ENCODE measurements at regions of chr11 and their contacts with region 1.

Region 1: GRCh38 chr11:73393479-73394380 is 17.5 kb downstream of the RELT start:
- DNase-seq: peak; percentile 44 to 75
- ATAC-seq: peak; percentile 55 to 72
- H3K4me3 ChIP-seq: no peak overlapping the region
- H3K27ac ChIP-seq: peak overlapping the region in 2 of 4 donors; percentile 27 to 53
- H3K4me1 ChIP-seq: peaks cover 30 to 60% of the 10 kb centered on the region in 2 donors
- H3K27me3 ChIP-seq: no peaks in the 10 kb centered on the region
- CTCF ChIP-seq: peak; percentile 77 to 91 (median 88)
- POLR2A ChIP-seq: no peak

Region 2: GRCh38 chr11:73350908-73351636 is 42.7 kb before region 1 on chr11:
- in situ Hi-C with region 1: loop called (anchors 5 kb)
- intact Hi-C with region 1: loop called (anchors 1 kb)
- DNase-seq: peak in 1 of 2 donors; percentile 51
- ATAC-seq: peak; percentile 81
- H3K4me3 ChIP-seq: no peak overlapping the region
- H3K27ac ChIP-seq: peak overlapping the region in 3 of 4 donors; percentile 7 to 27 (median 21)
- H3K4me1 ChIP-seq: peaks cover 0 to 5% of the 10 kb centered on the region in 2 donors
- H3K27me3 ChIP-seq: no peaks in the 10 kb centered on the region
- CTCF ChIP-seq: peak; percentile 92 to 97 (median 96)
- POLR2A ChIP-seq: no peak